Sigmoid colon (tissue), 7 donors: ENCODE measurements at regions of chr5 and their contacts with region 1.

Region 1: GRCh38 chr5:136212252-136212721 is 19.3 kb upstream of the SMIM32 start:
- DNase-seq: peak; percentile 76
- H3K4me3 ChIP-seq: no peak overlapping the region
- H3K27ac ChIP-seq: no peak overlapping the region
- H3K4me1 ChIP-seq: no peaks in the 10 kb centered on the region
- H3K27me3 ChIP-seq: peaks cover 0 to 12% (median 7%) of the 10 kb centered on the region in 3 donors
- CTCF ChIP-seq: peak; percentile 62 to 89 (median 80)
- EP300 ChIP-seq: no peak
- POLR2A ChIP-seq: no peak

Region 2: GRCh38 chr5:135560858-135561257 is 651.4 kb before region 1 on chr5:
- intact Hi-C with region 1: loop called (anchors 10 kb)
- DNase-seq: peak; percentile 83
- H3K4me3 ChIP-seq: no peak overlapping the region
- H3K27ac ChIP-seq: no peak overlapping the region
- H3K4me1 ChIP-seq: peaks cover 0 to 4% (median 0%) of the 10 kb centered on the region in 4 donors
- H3K27me3 ChIP-seq: peaks cover 0 to 20% (median 4%) of the 10 kb centered on the region in 3 donors
- CTCF ChIP-seq: peak; percentile 47 to 84 (median 68)
- EP300 ChIP-seq: no peak
- POLR2A ChIP-seq: no peak

Region 3: DNA sequence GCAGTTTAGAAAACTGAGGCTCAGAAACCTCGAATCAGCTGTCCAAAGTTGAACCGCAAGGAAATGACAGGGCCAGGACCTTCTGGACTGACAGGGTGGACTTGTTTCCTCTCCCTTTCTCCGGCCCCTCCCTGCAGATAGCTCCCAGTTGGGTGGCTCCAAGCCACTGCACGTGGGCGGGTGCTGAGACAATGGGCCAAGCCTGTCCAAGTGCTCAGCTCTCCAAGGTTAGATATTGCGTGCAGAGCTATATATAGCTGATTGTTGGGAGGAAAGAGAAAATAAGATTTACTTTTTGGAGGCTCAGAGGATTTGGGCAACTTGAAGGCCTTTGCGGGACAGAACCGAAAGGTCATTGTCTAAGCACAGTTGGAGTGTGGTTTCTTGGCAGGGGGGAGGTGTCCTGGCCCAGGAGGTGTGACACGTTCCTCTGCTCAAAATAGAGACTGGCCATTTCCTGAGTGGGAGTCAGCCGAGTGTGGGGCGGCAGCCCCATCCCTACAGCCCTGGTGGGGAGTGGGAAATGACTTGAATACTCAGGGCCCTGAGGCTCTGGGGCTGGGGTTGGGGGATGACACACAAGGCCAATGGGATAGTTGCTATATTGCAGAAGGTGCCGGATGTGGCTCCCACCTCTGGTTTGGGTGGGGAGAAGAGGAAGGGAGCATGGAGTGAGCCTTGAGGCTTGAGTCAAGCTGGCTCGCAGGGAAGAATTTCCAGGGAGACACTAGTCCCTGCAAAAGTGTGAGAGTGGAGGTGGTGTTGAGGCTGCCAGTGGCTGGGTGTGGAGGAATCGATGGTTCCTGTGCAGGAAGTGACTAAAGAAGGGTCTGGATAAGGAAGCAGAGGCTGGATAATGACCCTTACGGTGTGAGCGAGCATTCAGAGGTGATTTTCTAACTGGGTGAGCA is 124.1 kb before region 1 on chr5:
- intact Hi-C with region 1: loop called (anchors 5 kb)
- DNase-seq: peak; percentile 85
- H3K4me3 ChIP-seq: no peak overlapping the region
- H3K27ac ChIP-seq: peak overlapping the region in 3 of 4 donors; percentile 55 to 74 (median 67)
- H3K4me1 ChIP-seq: peaks cover 0 to 52% (median 24%) of the 10 kb centered on the region in 4 donors
- H3K27me3 ChIP-seq: no peaks in the 10 kb centered on the region
- CTCF ChIP-seq: no peak
- EP300 ChIP-seq: peak in 1 of 4 donors; percentile 63
- POLR2A ChIP-seq: no peak